ENCODE measurements at regions of chr19 and their contacts with region 1.

Region 1: GRCh38 chr19:18469069-18469846 is 31.3 kb upstream of the ISYNA1 start:
- DNase-seq: peak; percentile 53 to 95
- H3K4me3 ChIP-seq: no peak overlapping the region
- H3K27ac ChIP-seq: peak overlapping the region; percentile 27
- H3K4me1 ChIP-seq: peaks cover 0 to 1% (median 0%) of the 10 kb centered on the region in 4 experiments; a peak in 2 of 7 replicates
- H3K27me3 ChIP-seq: no peaks in the 10 kb centered on the region
- CTCF ChIP-seq: peak; percentile 92 to 96 (median 95)
- EP300 ChIP-seq: no peak
- POLR2A ChIP-seq: no peak
- RAD21 ChIP-seq: peak; percentile 49 to 60

Region 2: DNA sequence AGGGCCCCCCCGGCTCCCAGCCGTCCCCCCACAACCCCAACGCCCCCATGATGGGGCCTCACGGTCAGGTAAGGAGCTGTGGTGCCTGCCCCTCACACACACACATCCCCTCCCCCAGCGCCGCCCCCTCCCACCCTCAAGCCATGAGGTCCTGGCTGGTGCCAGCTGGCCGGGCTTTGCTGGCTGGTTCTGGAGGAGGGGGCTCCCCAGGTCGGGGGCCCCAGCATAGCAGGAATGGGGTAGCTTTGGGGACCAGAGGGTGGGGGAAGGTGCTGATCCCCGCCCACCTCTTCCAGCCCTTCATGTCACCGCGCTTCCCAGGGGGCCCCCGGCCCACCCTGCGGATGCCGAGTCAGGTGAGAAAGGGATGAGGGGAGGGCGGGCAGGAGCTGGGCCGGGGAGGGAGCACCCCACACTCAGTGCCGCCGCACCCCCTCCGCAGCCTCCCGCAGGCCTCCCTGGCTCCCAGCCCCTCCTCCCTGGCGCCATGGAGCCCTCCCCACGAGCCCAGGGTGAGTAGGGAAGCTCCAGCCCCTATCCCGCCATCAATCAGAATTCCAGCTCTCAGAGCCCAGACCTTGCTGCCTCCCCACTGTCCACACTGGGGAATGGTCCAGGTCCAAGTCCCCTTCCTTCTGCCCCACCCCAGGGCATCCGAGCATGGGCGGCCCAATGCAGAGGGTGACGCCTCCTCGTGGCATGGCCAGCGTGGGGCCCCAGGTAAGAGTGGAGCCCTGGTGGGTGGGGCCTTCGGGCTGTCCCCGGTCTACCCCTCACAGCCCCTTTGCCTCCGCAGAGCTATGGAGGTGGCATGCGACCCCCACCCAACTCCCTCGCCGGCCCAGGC is 37.7 kb before region 1 on chr19:
- CTCF ChIA-PET with region 1: no interaction called
- POLR2A ChIA-PET with region 1: no interaction called
- DNase-seq: no peak
- H3K4me3 ChIP-seq: no peak overlapping the region
- H3K27ac ChIP-seq: no peak overlapping the region
- H3K4me1 ChIP-seq: peaks cover 0 to 46% (median 28%) of the 10 kb centered on the region in 4 experiments; a peak in 6 of 7 replicates
- H3K27me3 ChIP-seq: no peaks in the 10 kb centered on the region; a peak in 1 of 7 replicates
- CTCF ChIP-seq: no peak
- EP300 ChIP-seq: no peak
- POLR2A ChIP-seq: no peak
- RAD21 ChIP-seq: no peak

Region 3: GRCh38 chr19:18456974-18457373 is 12.3 kb before region 1 on chr19:
- CTCF ChIA-PET with region 1: interaction called, 143 read pairs
- POLR2A ChIA-PET with region 1: interaction called, 3 read pairs
- DNase-seq: no peak
- H3K4me3 ChIP-seq: no peak overlapping the region
- H3K27ac ChIP-seq: no peak overlapping the region
- H3K4me1 ChIP-seq: no peaks in the 10 kb centered on the region; a peak in 1 of 7 replicates
- H3K27me3 ChIP-seq: no peaks in the 10 kb centered on the region
- CTCF ChIP-seq: no peak
- EP300 ChIP-seq: no peak
- POLR2A ChIP-seq: no peak
- RAD21 ChIP-seq: no peak

Region 4: GRCh38 chr19:18507021-18507726 is 37.9 kb after region 1 on chr19:
- CTCF ChIA-PET with region 1: interaction called, 40 read pairs
- POLR2A ChIA-PET with region 1: no interaction called
- DNase-seq: no peak
- H3K4me3 ChIP-seq: no peak overlapping the region
- H3K27ac ChIP-seq: no peak overlapping the region
- H3K4me1 ChIP-seq: no peaks in the 10 kb centered on the region; a peak in 1 of 7 replicates
- H3K27me3 ChIP-seq: no peaks in the 10 kb centered on the region
- CTCF ChIP-seq: no peak
- EP300 ChIP-seq: no peak
- POLR2A ChIP-seq: no peak
- RAD21 ChIP-seq: no peak

Region 5: GRCh38 chr19:18529782-18530181 is 60.5 kb after region 1 on chr19:
- CTCF ChIA-PET with region 1: interaction called, 10 read pairs
- POLR2A ChIA-PET with region 1: no interaction called
- DNase-seq: no peak
- H3K4me3 ChIP-seq: no peak overlapping the region
- H3K27ac ChIP-seq: no peak overlapping the region
- H3K4me1 ChIP-seq: no peaks in the 10 kb centered on the region
- H3K27me3 ChIP-seq: no peaks in the 10 kb centered on the region; a peak in 1 of 7 replicates
- CTCF ChIP-seq: no peak
- EP300 ChIP-seq: no peak
- POLR2A ChIP-seq: no peak; a peak in 1 of 3 replicates
- RAD21 ChIP-seq: no peak

Region 6: GRCh38 chr19:18675779-18676178 is 206.5 kb after region 1 on chr19:
- CTCF ChIA-PET with region 1: interaction called, 18 read pairs
- POLR2A ChIA-PET with region 1: no interaction called
- DNase-seq: peak in 1 of 2 experiments; percentile 76
- H3K4me3 ChIP-seq: no peak overlapping the region
- H3K27ac ChIP-seq: no peak overlapping the region
- H3K4me1 ChIP-seq: peaks cover 0 to 11% (median 3%) of the 10 kb centered on the region in 4 experiments; a peak in 5 of 7 replicates
- H3K27me3 ChIP-seq: no peaks in the 10 kb centered on the region
- CTCF ChIP-seq: peak; percentile 63 to 75 (median 67)
- EP300 ChIP-seq: no peak
- POLR2A ChIP-seq: no peak
- RAD21 ChIP-seq: peak; percentile 85 to 88